ENCODE measurements at regions of chrX and their contacts with region 1.

Region 1: DNA sequence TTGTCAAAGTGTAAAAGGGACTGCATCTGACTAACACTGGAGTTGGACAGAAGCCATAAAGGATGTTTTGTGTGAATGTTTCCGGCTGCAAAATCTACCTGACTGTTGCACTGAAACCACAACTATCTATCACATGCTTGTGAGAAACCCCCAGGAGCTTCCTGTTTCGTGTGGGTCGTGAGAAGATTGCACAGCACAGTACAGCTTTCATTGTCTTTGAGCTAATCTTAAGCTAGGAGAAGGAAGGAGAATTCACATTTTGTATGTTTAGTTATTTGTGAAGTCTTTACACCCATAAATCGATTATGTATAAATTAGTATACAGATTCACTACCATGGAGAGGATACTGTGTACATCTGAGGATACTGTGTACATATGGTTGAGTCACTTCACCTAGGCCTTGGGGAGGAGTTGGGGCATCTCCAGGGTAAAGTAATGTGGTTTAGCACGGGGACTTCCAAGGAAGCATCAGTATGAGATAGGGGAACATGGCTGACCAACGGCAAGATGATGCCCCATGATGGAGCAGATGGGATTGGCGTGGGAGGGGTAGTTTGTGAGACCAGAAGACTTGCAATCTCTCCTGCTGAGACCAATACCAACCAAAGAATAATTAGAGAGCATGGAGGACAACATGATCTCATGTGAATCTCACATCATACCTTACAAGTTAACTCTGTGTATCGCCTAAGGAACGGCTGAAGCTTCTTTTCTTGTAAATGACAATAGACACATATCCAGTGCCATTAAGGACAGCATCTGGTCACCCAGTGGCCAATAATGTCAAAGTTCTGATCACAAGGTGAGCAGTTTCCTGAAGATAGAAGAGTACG is 43.1 kb upstream of the FAM9C start:
- DNase-seq: peak; percentile 42 to 91
- ATAC-seq: peak; percentile 69 to 86 (median 80)
- H3K4me3 ChIP-seq: no peak overlapping the region
- H3K4me3 Mint-ChIP-seq: peak overlapping the region; percentile 90
- H3K27ac ChIP-seq: peak overlapping the region; percentile 98
- H3K27ac Mint-ChIP-seq: peak overlapping the region; percentile 99
- H3K4me1 ChIP-seq: peaks cover 74% of the 10 kb centered on the region
- H3K4me1 Mint-ChIP-seq: peaks cover 72 to 84% of the 10 kb centered on the region in 2 donors
- H3K27me3 ChIP-seq: no peaks in the 10 kb centered on the region
- H3K27me3 Mint-ChIP-seq: no peaks in the 10 kb centered on the region
- CTCF ChIP-seq: no peak

Region 2: DNA sequence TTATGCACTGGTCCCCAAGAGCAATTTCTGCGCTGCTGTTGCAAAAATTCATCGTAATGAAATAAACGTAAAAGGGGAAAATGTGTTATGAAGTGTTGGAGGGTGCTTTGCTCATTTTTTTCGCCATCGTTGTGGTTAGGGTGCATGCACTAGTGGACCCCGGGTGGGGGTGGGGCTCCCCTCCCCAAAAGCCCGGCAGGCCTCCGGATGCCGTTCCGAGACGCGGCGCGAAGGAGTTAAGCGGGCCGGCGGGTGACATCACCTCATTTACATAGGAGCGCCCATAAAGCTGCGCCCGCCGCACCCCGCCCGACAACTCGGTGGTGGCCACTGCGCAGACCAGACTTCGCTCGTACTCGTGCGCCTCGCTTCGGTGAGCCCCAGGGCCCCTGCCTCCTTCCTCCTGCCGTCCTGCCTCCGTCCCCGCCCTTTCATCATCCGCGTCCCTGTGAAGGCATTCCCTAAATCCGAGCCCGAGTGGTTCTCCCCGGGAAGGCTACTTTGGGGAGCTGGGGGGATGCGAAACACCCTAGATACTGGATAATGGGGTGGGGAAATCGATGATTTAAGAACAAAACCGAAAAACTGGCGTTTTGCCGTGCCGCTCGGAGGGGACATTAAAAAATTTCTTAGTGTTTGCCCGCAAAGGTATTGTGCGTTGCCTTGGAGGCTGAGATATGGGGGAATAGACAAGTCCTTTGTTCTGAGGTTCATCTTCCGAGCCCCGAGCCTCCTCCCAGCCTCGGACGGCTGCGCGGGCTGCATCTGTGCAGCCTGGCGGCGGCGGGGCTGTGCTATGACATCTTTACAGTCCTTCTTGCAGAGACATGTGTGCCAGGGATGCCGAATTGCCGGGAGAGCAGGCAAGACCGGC is 112.5 kb before region 1 on chrX and contains the start of gene TMSB4X:
- intact Hi-C with region 1: loop called (anchors 1 kb)
- DNase-seq: peak; percentile 79 to 88
- ATAC-seq: peak; percentile 58 to 84 (median 72)
- H3K4me3 ChIP-seq: peak within 1 kb of the TSS; percentile 94
- H3K4me3 Mint-ChIP-seq: peak within 1 kb of the TSS; percentile 95
- H3K27ac ChIP-seq: peak within 1 kb of the TSS; percentile 89
- H3K27ac Mint-ChIP-seq: peak within 1 kb of the TSS; percentile 94 to 97
- H3K4me1 ChIP-seq: peaks cover 41% of the 10 kb centered on the region
- H3K4me1 Mint-ChIP-seq: peaks cover 56 to 79% of the 10 kb centered on the region in 2 donors
- H3K27me3 ChIP-seq: no peaks in the 10 kb centered on the region
- H3K27me3 Mint-ChIP-seq: no peaks in the 10 kb centered on the region
- CTCF ChIP-seq: no peak
- total RNA-seq, gene TMSB4X: 5,049 to 6,005 (median 5,892) TPM

Region 3: DNA sequence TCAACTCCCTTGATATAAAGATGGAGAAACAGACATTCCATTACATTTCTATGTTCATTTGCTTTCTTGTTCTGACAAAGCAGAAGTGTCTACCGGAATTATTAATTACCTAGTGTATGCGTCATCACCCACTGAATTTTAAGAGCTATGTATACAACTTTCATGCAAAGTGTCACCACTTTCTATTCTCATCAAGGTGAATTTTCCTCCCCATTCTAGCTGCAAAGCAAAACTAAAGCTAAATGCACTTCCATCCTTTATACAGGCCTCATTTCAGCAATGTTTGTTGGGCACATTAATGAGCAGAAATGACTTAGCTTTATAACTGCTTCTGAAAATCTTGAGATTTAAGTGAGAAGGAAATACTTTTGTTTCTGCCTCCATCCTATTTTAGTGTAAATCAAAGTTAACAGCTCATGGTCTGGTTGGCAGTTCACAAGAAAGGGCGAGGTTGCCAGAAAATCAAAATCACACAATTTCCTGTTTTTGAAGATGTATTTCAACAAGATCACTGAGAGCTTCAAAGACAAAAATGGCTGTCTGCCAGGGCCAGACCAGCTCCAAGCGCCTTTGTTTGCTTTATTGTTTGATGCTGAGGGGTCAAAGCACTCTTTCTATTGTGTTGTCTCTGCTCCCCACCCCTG is 35.9 kb before region 1 on chrX:
- intact Hi-C with region 1: loop called (anchors 5 kb)
- DNase-seq: peak in 1 of 2 donors; percentile 78
- ATAC-seq: peak in 2 of 3 donors; percentile 59 to 63
- H3K4me3 ChIP-seq: no peak overlapping the region
- H3K4me3 Mint-ChIP-seq: peak overlapping the region; percentile 47
- H3K27ac ChIP-seq: peak overlapping the region; percentile 82
- H3K27ac Mint-ChIP-seq: peak overlapping the region; percentile 76 to 83
- H3K4me1 ChIP-seq: peaks cover 46% of the 10 kb centered on the region
- H3K4me1 Mint-ChIP-seq: peaks cover 48% of the 10 kb centered on the region in 2 donors
- H3K27me3 ChIP-seq: no peaks in the 10 kb centered on the region
- H3K27me3 Mint-ChIP-seq: peaks cover 0 to 11% of the 10 kb centered on the region in 2 donors
- CTCF ChIP-seq: no peak

Region 4: DNA sequence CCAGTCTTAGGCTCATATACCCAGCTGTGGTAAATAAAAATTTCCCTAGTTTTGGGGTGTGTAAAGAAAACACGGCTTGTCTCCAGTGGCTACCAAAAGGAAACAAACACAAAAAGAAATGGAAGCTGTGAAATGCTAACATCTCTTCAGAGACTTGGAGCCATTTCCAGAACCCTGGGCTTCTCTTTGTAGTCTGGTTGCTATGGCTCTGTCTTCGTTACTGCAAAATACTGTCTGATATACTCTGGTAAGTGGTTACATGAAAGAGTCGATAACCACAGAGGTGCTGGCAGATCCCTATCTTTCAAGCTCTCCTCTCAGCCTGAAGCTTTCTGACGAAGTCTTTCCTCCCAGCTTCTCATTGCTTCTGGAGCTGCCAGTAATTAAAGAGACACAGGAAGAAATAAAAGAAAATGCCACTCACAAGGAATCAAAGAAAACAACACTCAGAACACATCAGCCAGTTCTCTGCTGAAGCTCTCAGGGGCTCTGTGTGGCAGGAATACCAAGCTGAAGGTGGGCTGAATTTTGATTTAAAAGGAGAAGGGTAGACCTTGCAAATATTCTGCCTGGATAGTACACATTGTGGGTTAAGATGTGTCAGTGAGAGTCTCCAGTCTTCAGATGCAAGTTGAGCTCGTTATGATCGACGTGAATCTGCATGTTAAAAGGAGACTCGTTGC is 64.4 kb after region 1 on chrX:
- intact Hi-C with region 1: no loop called
- DNase-seq: peak in 1 of 2 donors; percentile 83
- ATAC-seq: peak; percentile 49 to 94 (median 77)
- H3K4me3 ChIP-seq: no peak overlapping the region
- H3K4me3 Mint-ChIP-seq: peak overlapping the region; percentile 41
- H3K27ac ChIP-seq: peak overlapping the region; percentile 72
- H3K27ac Mint-ChIP-seq: peak overlapping the region; percentile 59 to 85
- H3K4me1 ChIP-seq: peaks cover 10% of the 10 kb centered on the region
- H3K4me1 Mint-ChIP-seq: peaks cover 8 to 10% of the 10 kb centered on the region in 2 donors
- H3K27me3 ChIP-seq: no peaks in the 10 kb centered on the region
- H3K27me3 Mint-ChIP-seq: peaks cover 0 to 3% of the 10 kb centered on the region in 2 donors
- CTCF ChIP-seq: no peak

Region 5: DNA sequence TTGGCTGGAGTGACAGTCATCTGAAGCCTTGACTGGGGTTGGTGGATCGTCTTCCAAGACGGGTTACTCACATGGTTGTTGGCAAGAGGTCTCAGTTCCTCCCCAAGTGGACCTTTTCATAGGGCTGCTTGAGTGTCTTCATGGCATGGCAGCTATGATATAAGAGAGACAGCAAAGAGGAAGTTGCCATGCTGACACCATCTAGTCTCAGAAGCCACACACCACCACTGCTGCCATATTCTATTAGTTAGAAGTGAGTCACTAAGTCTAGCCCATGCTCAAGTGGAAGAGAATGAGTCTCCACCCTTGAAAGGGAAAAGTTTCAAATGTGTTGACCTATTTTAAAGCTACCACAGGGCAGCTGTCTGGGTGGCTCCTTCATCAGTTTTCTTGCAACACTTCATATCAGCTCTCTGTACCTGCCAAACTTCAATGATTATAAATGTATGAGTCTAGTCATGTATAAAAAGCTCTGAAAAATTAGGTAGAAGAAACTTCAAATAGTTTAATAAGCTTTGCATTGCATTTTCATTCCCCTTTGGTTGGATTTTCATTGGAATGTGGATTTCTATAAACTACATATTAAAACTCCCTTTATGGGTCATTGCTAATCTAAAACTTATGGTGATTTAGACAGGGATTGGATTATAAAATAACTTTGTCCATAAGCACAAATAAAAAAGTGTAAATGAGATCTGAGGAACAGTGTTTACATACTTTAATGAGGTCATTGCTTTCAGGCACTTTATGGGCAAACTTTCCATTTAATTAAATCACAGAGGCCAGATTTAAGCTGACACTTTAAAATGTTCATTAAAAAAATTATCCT is 300.3 kb after region 1 on chrX:
- intact Hi-C with region 1: loop called (anchors 5 kb)
- DNase-seq: no peak
- ATAC-seq: peak; percentile 74 to 89 (median 86)
- H3K4me3 ChIP-seq: no peak overlapping the region
- H3K4me3 Mint-ChIP-seq: peak overlapping the region; percentile 33
- H3K27ac ChIP-seq: peak overlapping the region; percentile 2
- H3K27ac Mint-ChIP-seq: peak overlapping the region; percentile 78 to 86
- H3K4me1 ChIP-seq: no peaks in the 10 kb centered on the region
- H3K4me1 Mint-ChIP-seq: peaks cover 21 to 34% of the 10 kb centered on the region in 2 donors
- H3K27me3 ChIP-seq: no peaks in the 10 kb centered on the region
- H3K27me3 Mint-ChIP-seq: no peaks in the 10 kb centered on the region
- CTCF ChIP-seq: no peak